Dorsolateral prefrontal cortex (tissue), 120 donors: ENCODE measurements at regions of chr4 and their contacts with region 1.

Region 1: DNA sequence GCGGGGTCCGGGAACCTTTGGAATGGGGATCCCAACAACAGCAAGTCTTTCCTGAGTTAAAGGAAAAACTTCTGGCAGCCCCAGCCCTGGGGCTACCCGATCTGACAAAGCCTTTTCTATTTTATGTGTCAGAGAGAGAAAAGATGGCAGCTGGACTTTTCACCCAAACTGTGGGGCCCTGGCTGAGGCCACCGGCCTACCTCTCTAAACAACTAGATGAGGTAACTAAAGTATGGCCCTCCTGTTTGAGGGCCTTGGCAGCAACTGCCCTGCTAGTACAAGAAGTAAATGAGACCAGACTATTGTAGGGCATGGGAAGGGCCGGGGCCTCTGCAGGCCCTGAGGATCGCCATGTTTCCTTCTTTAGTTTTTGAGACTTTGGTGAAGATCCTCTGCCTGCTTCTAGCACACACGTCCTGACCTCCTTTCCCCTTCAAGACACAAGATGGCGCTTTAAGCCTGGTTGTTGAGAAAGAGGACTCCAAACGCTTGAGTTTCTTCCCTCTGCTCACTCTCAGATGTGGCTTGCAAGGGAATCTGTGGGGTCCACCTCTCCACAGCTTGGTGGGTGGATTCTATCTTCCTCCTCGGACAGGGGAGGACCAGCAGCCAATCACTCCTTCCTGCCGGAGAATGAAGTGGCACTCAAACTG is 18.5 kb upstream of the DRD5 start:
- DNase-seq: peak in 7 of 10 donors; percentile 33 to 69 (median 54)
- H3K4me3 ChIP-seq: no peak overlapping the region
- H3K27ac ChIP-seq: no peak overlapping the region
- H3K27me3 ChIP-seq: peaks cover 0 to 13% (median 0%) of the 10 kb centered on the region in 45 donors
- CTCF ChIP-seq: peak; percentile 39 to 90 (median 74)

Region 2: GRCh38 chr4:9880406-9881197 is 117.7 kb after region 1 on chr4:
- intact Hi-C with region 1: no loop called
- DNase-seq: no peak
- H3K4me3 ChIP-seq: no peak overlapping the region
- H3K27ac ChIP-seq: no peak overlapping the region
- H3K27me3 ChIP-seq: no peaks in the 10 kb centered on the region
- CTCF ChIP-seq: no peak

Region 3: GRCh38 chr4:9904976-9905587 is 142.1 kb after region 1 on chr4:
- intact Hi-C with region 1: loop called in 1 of 2 experiments (anchors 10 kb)
- DNase-seq: peak in 1 of 10 donors; percentile 13
- H3K4me3 ChIP-seq: no peak overlapping the region
- H3K27ac ChIP-seq: no peak overlapping the region
- H3K27me3 ChIP-seq: no peaks in the 10 kb centered on the region
- CTCF ChIP-seq: no peak

Region 4: DNA sequence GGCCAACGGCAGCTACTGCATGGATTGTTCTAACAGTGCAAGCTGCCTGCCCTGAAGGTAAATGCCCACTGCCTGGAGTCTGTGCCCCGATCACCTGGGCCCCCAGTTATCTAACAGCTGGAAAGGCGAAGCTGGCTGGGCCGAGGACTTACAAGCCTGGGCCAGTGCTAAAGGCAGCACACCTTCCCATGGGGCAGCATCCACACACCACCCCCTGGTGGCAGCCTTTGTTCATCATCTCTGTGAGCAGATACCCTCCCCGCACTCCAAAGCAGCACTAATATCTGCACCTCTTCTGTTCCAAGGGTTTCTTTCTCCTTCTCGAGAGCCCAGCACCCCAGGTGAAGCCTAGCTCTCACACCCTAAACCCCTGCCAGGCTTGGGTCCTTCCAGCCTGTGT is 250.8 kb after region 1 on chr4:
- intact Hi-C with region 1: loop called (anchors 1 to 2 kb)
- DNase-seq: peak in 1 of 10 donors; percentile 52
- H3K4me3 ChIP-seq: no peak overlapping the region
- H3K27ac ChIP-seq: no peak overlapping the region
- H3K27me3 ChIP-seq: no peaks in the 10 kb centered on the region
- CTCF ChIP-seq: peak in 54 of 56 donors; percentile 18 to 63 (median 46)

Region 5: DNA sequence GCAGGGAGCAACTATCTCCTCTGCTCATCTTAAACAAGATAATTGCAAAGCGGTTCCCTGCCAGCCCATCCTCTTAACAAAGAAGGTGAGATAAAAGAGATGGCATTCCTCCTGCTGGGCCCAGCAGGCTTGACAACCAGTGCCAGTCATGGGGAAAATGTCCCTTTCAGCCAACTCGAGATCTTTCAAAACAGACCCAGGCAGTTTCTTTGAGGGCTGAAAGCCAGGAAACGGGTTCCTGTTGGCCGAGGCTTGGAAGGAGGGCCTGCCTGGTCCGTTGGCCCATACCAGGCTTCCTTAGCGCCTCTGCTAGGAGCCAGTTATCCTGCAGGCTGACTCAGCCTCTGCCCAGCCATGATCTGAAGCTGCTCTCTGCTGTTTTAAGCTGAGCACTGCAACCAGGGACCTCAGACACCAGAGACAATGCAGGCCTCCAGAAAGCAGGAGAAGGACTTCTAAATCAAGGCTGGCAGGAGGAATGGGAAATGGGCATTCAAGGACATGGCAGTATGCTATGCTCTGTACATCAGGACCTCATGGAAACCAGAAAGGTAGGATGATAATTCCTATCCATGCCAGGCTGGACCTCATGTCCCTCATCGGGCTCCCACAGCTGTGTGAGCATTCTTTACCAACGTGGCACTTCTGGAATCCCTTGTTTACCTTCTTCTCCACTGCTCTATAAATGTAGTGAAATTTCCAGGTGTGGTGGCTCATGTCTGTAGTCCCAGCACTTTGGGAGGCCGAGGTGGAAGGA is 300.8 kb after region 1 on chr4:
- intact Hi-C with region 1: loop called (anchors 1 to 5 kb)
- DNase-seq: peak in 9 of 10 donors; percentile 42 to 83 (median 76)
- H3K4me3 ChIP-seq: no peak overlapping the region
- H3K27ac ChIP-seq: peak overlapping the region in 39 of 59 donors; percentile 2 to 79 (median 47)
- H3K27me3 ChIP-seq: no peaks in the 10 kb centered on the region
- CTCF ChIP-seq: peak in 55 of 56 donors; percentile 30 to 94 (median 81)